ENCODE measurements at regions of chr9 and their contacts with region 1.

Region 1: GRCh38 chr9:96376891-96377874 is 6.3 kb downstream of the SLC35D2 start:
- DNase-seq: peak; percentile 44 to 56
- H3K4me3 ChIP-seq: no peak overlapping the region
- H3K4me3 Mint-ChIP-seq: peak overlapping the region; percentile 48
- H3K27ac Mint-ChIP-seq: peak overlapping the region; percentile 84
- H3K4me1 ChIP-seq: peaks cover 35% of the 10 kb centered on the region
- H3K4me1 Mint-ChIP-seq: peaks cover 36% of the 10 kb centered on the region
- H3K27me3 ChIP-seq: no peaks in the 10 kb centered on the region
- H3K27me3 Mint-ChIP-seq: no peaks in the 10 kb centered on the region
- CTCF ChIP-seq: no peak

Region 2: DNA sequence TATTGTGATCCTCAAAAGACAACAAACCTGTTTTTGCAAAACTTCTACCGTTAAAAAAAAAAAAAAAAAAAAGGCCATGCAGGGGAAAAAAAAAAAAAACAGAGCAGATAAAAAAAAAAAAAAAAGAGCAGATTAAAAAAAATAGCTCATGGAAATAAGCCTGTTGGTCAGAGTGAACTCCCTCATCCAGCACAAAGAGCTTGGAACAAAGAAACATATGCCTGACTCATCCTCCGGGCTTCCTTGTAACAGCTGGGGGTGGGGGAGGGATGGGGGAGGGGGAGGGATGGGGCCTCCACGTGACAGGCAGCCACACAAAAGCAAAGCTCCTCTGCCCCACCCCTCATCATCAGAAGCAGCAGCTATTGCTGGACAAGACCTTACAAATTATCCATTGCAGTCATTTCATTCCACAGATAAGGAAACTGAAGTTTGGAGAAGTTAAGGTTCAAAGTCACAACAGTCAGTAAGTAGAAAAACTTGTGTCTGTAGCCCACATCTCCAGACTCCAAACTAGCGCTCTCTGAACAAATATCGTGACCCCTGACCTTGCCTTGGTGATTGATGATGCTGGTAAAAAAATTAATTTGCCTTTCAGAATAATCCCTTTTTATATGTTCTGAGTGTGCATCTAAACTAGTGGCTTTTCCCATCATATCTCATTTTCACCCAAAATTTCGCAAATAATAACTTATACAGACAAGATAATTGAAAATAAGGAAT is 32.6 kb before region 1 on chr9:
- CTCF ChIA-PET with region 1: no interaction called
- POLR2A ChIA-PET with region 1: no interaction called
- intact Hi-C with region 1: loop called (anchors 1 kb)
- DNase-seq: peak; percentile 74 to 91
- H3K4me3 ChIP-seq: no peak overlapping the region
- H3K4me3 Mint-ChIP-seq: no peak overlapping the region
- H3K27ac Mint-ChIP-seq: no peak overlapping the region
- H3K4me1 ChIP-seq: peaks cover 48% of the 10 kb centered on the region
- H3K4me1 Mint-ChIP-seq: peaks cover 7% of the 10 kb centered on the region
- H3K27me3 ChIP-seq: no peaks in the 10 kb centered on the region
- H3K27me3 Mint-ChIP-seq: no peaks in the 10 kb centered on the region
- CTCF ChIP-seq: no peak

Measured in Caco-2 (cell line).